GM12878 (cell line): ENCODE measurements at regions of chr2 and their contacts with region 1.

Region 1: GRCh38 chr2:102235491-102235890 is 48.7 kb downstream of the IL1RL2 start:
- DNase-seq: no peak
- ATAC-seq: peak; percentile 46
- H3K4me3 ChIP-seq: no peak overlapping the region
- H3K27ac ChIP-seq: no peak overlapping the region
- H3K4me1 ChIP-seq: peaks cover 10% of the 10 kb centered on the region; the same call in 1 of the 2 replicates
- H3K27me3 ChIP-seq: no peaks in the 10 kb centered on the region
- CTCF ChIP-seq: peak in 2 of 3 experiments; percentile 27 to 36; a peak in 2 of 6 replicates
- EP300 ChIP-seq: no peak
- POLR2A ChIP-seq: no peak
- RAD21 ChIP-seq: peak; percentile 59

Region 2: GRCh38 chr2:101900375-101900774 is 335.1 kb before region 1 on chr2:
- CTCF ChIA-PET with region 1: interaction called, 5 read pairs
- POLR2A ChIA-PET with region 1: interaction called, 4 read pairs
- RAD21 ChIA-PET with region 1: interaction called, 3 read pairs
- SMC1A ChIA-PET with region 1: no interaction called
- in situ Hi-C with region 1: no loop called
- intact Hi-C with region 1: loop called (anchors 5 kb)
- DNase-seq: peak; percentile 71
- ATAC-seq: peak; percentile 97
- H3K4me3 ChIP-seq: no peak overlapping the region; the same call in 1 of the 2 replicates
- H3K27ac ChIP-seq: no peak overlapping the region
- H3K4me1 ChIP-seq: peaks cover 5% of the 10 kb centered on the region
- H3K27me3 ChIP-seq: no peaks in the 10 kb centered on the region
- CTCF ChIP-seq: no peak
- EP300 ChIP-seq: peak; percentile 63 to 89; a peak in 3 of 4 replicates
- POLR2A ChIP-seq: no peak
- RAD21 ChIP-seq: no peak

Region 3: DNA sequence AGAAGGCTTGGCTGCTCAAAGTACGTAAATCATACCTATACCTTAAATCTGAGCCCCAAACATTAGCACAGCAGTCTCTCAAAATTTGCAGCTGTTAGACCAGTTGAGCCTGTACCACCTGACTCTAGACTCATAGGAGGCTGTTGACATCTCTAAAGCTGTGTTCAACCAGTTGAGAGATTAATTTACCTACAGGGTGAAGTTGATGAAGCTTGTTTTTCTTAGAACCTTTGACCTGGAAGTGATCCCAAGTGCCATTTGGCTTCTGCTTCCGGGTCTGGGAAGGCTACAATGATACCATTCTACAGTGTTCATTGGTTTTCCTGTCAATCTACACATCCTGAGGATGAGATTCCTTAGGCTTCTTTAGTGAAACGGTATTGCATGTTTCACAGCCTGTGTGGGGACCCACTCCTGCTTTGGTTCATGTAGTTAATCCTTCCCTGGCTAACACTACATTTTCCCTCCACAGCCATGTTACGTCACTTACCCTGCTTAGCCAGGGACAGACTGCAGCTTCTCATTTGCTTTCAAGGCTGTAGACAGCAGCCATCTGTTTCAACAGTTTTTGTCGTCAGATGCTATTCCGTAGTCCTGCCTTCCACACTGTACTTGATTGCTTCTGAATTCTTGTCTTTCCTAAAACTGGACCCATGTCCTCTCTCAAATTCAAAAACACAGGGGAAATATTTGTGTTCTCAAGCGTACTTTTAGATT is 53.4 kb before region 1 on chr2:
- CTCF ChIA-PET with region 1: interaction called, 9 read pairs
- POLR2A ChIA-PET with region 1: no interaction called
- RAD21 ChIA-PET with region 1: interaction called, 5 read pairs
- SMC1A ChIA-PET with region 1: interaction called, 14 read pairs
- in situ Hi-C with region 1: no loop called
- intact Hi-C with region 1: loop called (anchors 2 kb)
- DNase-seq: no peak
- ATAC-seq: no peak
- H3K4me3 ChIP-seq: no peak overlapping the region
- H3K27ac ChIP-seq: no peak overlapping the region
- H3K4me1 ChIP-seq: no peaks in the 10 kb centered on the region
- H3K27me3 ChIP-seq: no peaks in the 10 kb centered on the region; a peak in 1 of 4 replicates
- CTCF ChIP-seq: no peak
- EP300 ChIP-seq: no peak
- POLR2A ChIP-seq: no peak
- RAD21 ChIP-seq: no peak